ENCODE measurements at regions of chr1 and their contacts with region 1.

Region 1: DNA sequence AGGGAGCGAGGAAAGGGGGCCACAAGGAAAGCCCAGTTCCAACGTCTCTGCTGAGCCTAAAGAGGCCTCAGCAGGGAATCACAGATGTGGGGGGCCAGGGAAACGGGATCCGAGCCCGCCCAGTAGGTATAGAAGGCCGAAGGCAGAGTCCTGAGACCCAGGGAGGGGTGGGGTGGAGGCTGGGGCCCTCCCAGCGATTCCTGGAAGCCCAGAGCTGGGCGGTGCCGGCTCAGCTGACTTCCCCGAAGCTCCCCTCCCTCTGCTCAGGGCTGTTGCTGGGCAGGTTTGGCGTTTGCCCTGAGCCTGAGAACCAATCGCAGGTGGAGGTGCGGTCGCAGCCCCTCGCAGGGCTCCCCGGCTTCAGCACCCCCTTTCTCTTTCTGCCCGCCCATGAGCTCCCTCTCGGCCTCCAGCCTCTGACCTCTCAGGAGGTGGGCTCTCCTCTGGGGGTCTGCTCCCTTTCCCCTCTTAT is 12.8 kb downstream of the ADAMTSL4 start:
- H3K4me3 ChIP-seq: peak overlapping the region; percentile 56
- H3K27ac ChIP-seq: peak overlapping the region; percentile 96
- H3K4me1 ChIP-seq: peaks cover 21% of the 10 kb centered on the region
- CTCF ChIP-seq: no peak

Region 2: DNA sequence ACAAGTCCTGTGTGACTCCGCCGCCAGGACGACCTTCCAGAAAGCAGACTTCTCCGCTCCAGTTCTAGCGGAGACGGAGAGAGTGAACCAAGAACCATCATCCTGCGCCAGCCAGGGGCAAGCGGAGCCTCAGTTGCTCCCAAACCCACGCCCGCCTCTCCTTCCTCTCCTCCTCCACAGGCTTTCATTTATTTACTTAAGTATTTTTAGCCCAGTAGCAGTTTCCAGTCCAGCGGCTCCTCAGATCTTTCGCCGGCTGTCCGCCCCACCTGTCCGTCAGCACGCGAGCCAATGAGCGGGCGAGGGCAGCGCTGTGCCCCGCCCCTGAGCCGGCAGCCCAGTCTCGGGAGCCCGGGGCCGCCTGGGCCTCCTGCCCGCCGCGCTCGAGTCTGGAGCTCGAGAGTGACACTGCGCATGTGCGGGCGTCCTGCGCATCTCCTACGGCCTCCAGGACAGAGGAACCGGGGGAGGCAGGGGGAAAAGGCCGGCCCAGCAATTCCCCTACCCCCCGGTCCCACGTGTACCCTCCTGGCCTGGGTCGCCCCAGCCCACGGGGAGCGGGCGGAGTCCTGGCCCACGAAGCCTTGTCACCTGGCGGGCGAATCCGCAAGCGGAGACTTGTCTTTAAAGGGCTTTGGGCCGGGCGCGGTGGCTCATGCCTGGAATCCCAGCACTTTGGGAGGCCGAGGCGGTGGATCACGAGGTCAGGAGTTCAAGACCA is 46.5 kb before region 1 on chr1 and contains the start of gene FALEC:
- CTCF ChIA-PET with region 1: interaction called, 10 read pairs
- POLR2A ChIA-PET with region 1: no interaction called
- H3K4me3 ChIP-seq: peak within 1 kb of the TSS; percentile 56
- H3K27ac ChIP-seq: peak within 1 kb of the TSS; percentile 44; the same call in 1 of the 2 replicates
- H3K4me1 ChIP-seq: no peaks in the 10 kb centered on the region
- CTCF ChIP-seq: no peak; the same call in 1 of the 2 replicates

Region 3: GRCh38 chr1:150543500-150544141 is 18.4 kb before region 1 on chr1:
- CTCF ChIA-PET with region 1: interaction called, 73 read pairs
- POLR2A ChIA-PET with region 1: interaction called, 7 read pairs
- H3K4me3 ChIP-seq: no peak overlapping the region
- H3K27ac ChIP-seq: no peak overlapping the region
- H3K4me1 ChIP-seq: no peaks in the 10 kb centered on the region; the same call in 1 of the 2 replicates
- CTCF ChIP-seq: no peak

Region 4: DNA sequence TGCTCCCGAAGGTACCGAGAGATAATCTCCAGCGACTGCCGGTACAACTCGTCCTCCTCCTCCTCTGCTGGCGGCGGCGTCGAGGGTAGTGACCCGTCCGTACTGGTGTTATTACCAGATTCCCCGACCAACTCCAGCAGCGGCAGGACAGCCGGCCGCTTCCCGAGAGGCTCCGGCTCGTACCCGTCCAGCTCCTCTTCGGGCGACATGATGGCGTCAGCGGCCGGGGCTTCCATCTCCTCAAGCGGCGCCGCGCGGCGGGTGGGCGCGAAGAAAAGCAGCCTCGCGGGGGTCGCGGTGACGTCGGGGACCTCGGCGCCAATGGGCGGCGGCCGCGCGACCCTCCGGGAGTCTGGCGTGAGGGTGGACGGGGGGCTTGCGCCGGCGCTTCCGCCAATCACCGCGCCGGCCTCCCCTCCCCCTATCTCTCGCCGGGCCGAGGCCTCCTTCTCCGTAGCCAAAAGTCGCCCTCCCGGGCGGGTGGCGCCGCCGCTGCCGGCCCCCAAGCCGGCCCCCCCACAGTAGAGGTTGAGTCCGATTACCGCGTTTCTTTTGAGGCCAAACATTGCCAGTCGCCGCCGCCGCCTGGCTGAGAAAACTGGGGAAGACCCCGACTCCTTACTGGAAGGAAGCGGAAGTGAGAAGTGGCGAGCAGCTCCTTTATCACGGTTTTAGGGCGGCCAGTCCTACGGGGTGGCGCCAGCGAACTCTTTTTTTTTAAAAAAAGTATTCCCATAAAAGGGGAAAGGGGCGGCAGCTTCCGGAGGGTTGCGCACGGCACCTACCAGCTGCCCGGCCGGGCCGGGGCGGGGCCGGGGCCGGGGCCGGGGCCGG is 17.2 kb after region 1 on chr1 and contains the start of gene MCL1:
- CTCF ChIA-PET with region 1: interaction called, 135 read pairs
- POLR2A ChIA-PET with region 1: interaction called, 272 read pairs
- H3K4me3 ChIP-seq: peak within 1 kb of the TSS; percentile 82
- H3K27ac ChIP-seq: peak within 1 kb of the TSS; percentile 95
- H3K4me1 ChIP-seq: no peaks in the 10 kb centered on the region
- CTCF ChIP-seq: no peak

Region 5: GRCh38 chr1:150629115-150629928 is 67.3 kb after region 1 on chr1 and contains the start of gene ENSA:
- CTCF ChIA-PET with region 1: interaction called, 10 read pairs
- POLR2A ChIA-PET with region 1: interaction called, 9 read pairs
- H3K4me3 ChIP-seq: peak within 1 kb of the TSS; percentile 77
- H3K27ac ChIP-seq: peak within 1 kb of the TSS; percentile 61
- H3K4me1 ChIP-seq: no peaks in the 10 kb centered on the region
- CTCF ChIP-seq: no peak

Region 6: DNA sequence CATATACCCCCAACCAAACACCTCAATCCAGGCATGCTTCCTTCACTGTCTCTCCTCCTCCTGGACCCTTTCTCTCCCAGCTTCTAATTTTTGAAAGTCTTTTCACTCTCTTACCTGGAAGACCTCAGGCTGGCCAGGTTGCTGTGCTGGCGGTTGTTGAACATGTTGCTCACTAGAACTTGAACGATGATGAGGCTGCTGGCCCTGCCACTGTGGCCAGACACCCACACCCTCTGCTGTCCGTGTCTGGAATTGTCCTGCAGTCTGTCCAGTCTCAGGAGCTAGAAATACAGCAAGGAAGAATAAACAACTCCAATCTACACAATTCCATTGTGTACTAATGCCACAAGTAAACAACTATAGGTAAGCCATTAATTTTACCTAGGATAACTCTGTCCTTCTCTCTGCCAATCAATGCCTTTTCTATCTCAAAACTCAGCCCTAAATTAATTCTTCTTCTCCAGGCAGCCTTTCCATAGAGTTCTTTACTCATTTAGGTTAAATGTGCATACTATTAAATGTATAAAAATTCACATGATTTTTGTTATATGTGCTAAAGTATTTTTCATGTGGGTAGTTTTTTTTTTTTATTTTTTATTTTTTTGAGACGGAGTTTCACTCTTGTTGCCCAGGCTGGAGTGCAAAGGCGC is 251.2 kb after region 1 on chr1:
- CTCF ChIA-PET with region 1: interaction called, 14 read pairs
- POLR2A ChIA-PET with region 1: no interaction called
- H3K4me3 ChIP-seq: no peak overlapping the region
- H3K27ac ChIP-seq: no peak overlapping the region
- H3K4me1 ChIP-seq: peaks cover 13% of the 10 kb centered on the region
- CTCF ChIP-seq: peak; percentile 66; the same call in 1 of the 2 replicates

Region 7: DNA sequence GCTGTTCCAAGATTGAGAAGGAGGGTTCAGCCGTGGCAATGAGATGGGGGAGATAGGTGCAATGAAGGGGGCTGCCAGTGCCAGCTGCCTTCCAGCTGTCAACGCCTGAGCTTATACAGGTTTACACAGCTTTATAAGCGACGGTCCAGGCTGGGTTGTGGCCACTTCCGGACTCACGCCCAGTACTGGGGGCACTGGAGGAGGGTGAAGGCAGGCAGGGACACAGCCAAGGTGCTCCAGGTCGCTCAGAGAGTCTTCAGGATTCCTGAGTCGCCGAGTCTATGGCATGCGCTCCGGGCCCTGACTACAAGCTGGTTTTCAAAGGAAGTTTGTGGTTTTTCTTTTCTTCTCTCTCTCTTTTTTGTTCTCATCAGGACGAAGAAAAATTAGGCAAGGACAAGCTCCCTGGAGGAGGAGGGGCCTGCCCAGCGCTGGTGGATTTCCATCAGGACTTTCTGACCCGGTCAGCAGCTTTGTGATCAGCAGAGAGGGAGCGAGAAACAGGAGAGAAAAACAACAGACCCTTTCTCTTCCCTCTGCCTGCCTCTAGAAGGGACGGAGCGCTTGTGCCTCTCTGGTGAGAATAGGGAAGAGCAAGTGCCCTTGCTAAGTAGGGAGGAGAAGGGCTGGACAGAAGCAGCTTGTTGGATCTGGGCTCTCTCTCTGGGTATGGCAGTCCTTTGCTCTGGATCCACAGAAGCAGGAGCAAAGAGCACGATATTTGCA is 444.5 kb after region 1 on chr1 and contains the start of gene MINDY1:
- CTCF ChIA-PET with region 1: interaction called, 15 read pairs
- POLR2A ChIA-PET with region 1: no interaction called
- H3K4me3 ChIP-seq: peak within 1 kb of the TSS; percentile 53
- H3K27ac ChIP-seq: peak within 1 kb of the TSS; percentile 58
- H3K4me1 ChIP-seq: 0 out of 2 replicates have a peak, but pooled peaks cover 3% of the 10 kb centered on the region
- CTCF ChIP-seq: no peak

Measured in HEK293 (cell line).